Posterior cingulate gyrus (tissue), 11 donors: ENCODE measurements at regions of chr20 and their contacts with region 1.

Region 1: GRCh38 chr20:38260378-38261053 is at the start of gene KIAA1755:
- DNase-seq: peak; percentile 58 to 95 (median 67)

Region 2: DNA sequence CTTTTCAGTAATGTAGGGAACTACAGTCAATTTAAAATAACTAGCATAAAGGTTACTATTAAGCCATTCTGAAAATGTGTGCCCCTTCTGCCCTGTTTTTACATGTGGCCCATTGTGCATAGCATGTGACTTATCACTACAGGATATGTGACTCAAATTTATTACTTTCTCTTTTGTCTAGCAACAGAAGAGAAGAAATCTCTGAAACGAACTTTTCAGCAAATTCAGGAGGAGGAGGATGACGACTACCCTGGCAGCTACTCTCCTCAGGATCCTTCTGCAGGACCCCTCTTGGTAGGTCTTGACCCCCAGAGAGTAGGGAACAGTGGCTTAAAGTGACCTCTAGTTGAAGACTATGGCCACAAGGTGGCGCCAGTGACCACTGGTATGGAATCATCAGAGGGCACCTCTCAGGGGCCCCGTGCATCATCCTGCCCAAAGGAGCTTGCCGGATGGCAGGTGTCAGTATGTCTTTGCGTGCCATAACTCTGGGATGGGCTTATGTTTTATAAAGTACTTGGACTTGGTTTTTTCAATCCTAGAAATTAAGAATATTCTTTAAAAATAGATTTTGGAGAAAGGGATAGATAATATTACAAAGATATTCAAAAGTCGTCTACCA is 203.1 kb before region 1 on chr20:
- intact Hi-C with region 1: no loop called
- DNase-seq: peak; percentile 41 to 96 (median 85)

Region 3: GRCh38 chr20:38286586-38287531 is 26.3 kb after region 1 on chr20:
- intact Hi-C with region 1: loop called (anchors 2 kb)
- DNase-seq: peak in 9 of 10 donors; percentile 64 to 97 (median 83)

Region 4: GRCh38 chr20:38304845-38305447 is 44.4 kb after region 1 on chr20:
- intact Hi-C with region 1: no loop called
- DNase-seq: peak in 7 of 10 donors; percentile 32 to 91 (median 55)